ENCODE measurements at regions of chr3 and their contacts with region 1.

Region 1: GRCh38 chr3:47282424-47283192 is at the starts of genes KIF9 and KLHL18:
- DNase-seq: peak; percentile 89 to 98 (median 95)

Region 2: GRCh38 chr3:47176582-47176981 is 106.0 kb before region 1 on chr3:
- intact Hi-C with region 1: no loop called
- DNase-seq: no peak

Region 3: DNA sequence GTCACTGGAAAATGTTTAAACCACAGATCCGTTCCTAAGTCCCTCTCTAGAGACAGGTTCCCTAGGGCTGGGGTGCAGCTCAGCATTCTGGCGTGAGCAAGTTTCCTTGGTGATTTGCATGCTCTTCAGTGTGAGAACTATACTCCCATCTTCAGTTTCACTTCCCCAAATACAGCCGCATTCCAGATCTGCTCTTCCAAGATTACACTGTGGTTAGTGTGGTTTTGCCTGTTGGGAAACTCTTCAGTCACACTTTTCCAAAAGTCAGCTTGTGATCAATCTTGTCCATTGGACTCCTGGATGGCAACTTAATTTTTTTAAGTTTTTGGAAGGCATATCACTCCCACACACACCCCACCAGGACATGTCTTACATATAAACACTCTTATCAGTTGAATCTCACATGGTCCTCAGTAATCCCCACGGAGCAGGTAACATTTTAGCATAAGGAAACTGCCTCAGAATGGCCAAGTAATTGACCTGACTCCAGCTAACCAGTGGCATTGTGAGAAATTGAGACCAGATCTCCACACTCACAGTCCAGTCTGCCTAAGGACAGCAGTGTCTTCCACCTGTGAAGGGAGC is 64.7 kb after region 1 on chr3:
- intact Hi-C with region 1: no loop called
- DNase-seq: no peak

Region 4: DNA sequence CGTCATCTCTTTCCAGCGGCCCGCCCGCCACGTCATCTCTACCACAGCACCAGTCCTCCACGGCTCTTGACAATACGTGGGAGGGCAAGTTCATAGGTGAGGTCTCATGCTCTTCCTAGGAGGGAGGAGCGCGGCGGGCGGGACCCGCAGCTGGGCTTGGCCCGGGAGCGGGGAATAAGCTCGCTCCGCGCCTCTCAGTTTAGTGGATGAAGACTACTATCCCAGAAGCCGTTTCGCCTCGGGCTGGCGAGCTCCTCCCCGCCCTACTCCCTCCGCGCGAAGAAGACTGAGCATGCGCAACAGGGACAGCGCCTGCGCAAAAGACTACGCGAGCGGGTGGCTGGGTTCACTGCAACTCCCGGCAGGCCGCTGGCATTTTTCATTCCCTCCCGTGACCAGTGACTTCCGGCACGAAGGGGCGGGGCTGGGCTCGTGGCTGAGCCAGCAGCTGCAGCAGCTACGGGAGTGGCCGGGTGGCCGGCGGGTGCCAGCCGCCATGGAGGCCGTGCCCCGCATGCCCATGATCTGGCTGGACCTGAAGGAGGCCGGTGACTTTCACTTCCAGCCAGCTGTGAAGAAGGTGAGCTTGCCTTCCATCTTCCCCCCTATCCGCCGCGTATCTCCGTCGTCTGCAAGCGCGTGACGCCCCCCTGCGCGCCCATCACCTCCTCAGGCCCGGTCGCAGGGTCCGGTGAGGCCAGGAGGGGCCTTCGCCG is 98.2 kb after region 1 on chr3 and contains the start of gene PTPN23:
- intact Hi-C with region 1: loop called (anchors 10 kb)
- DNase-seq: peak; percentile 93 to 100 (median 98)

Region 5: DNA sequence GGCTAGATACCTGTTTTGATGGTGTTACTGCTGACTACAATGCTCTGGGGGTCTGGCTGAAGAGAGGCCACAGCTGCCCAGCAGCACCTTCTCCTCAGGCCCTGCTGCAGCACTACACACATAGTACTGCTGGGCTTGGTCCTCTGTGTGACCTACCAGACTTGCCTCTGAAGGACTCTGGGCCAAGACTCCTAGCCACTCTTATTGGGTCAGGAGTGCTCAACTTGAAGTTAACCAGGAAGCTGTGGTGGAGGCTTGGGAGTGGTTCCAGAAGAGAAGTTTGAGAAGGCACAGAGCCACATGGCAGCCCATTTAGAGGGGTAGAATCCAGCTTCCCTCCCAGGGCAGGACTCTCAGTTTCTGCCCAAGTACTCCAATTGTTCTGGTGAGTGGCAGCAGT is 214.3 kb after region 1 on chr3:
- intact Hi-C with region 1: no loop called
- DNase-seq: no peak

Region 6: DNA sequence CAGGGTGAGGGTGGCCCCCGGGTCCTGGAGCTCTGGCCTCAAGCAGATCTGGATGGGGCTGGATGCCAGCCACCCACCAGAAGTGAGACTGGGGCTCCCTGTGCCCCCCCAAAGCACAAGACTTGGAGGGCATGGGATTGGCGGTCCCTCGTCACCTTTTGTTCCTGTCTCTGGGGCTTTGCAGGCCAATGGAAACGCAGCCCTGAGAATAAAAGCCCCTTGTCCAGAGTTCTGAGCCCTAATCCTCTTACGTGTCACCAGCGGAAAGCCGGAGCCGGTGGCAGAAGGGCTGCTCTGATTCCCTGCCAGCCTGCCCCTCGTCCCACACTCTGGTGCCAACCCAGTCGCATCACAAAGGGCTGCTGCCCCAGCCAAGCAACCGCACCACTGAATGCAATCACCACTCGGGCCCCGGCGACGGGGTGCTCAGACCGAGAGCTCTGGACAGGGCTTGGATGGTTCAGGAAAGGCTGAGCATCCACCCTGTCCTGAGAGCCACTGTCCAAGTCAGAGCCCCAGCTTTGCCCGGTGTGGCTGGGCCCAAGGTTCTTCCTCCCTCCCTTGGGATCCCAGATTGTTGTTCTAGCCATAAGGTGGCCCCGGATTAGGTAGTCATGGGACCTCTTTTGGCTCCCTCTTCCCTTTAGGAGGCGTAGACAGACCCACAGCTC is 253.7 kb after region 1 on chr3:
- intact Hi-C with region 1: no loop called
- DNase-seq: peak; percentile 32 to 86 (median 68)